Dorsolateral prefrontal cortex (tissue), 120 donors: ENCODE measurements at regions of chr10 and their contacts with region 1.

Region 1: GRCh38 chr10:18097524-18097923 is 42.7 kb upstream of the CACNB2 start:
- DNase-seq: no peak
- H3K4me3 ChIP-seq: no peak overlapping the region
- H3K27ac ChIP-seq: no peak overlapping the region
- H3K27me3 ChIP-seq: peaks cover 0 to 4% (median 0%) of the 10 kb centered on the region in 45 donors
- CTCF ChIP-seq: no peak

Region 2: GRCh38 chr10:17923728-17924127 is 173.8 kb before region 1 on chr10:
- intact Hi-C with region 1: loop called in 1 of 2 experiments (anchors 10 kb)
- DNase-seq: peak in 5 of 10 donors; percentile 33 to 66 (median 53)
- H3K4me3 ChIP-seq: no peak overlapping the region
- H3K27ac ChIP-seq: peak overlapping the region in 15 of 59 donors; percentile 11 to 76 (median 46)
- H3K27me3 ChIP-seq: no peaks in the 10 kb centered on the region
- CTCF ChIP-seq: no peak